Adrenal gland (tissue), 19 donors: ENCODE measurements at regions of chr22 and their contacts with region 1.

Region 1: GRCh38 chr22:25447686-25448434 is 116.6 kb upstream of the GRK3 start:
- DNase-seq: peak; percentile 85 to 97 (median 88)
- H3K4me3 ChIP-seq: peak overlapping the region; percentile 61 to 98 (median 74)
- H3K27ac ChIP-seq: peak overlapping the region in 4 of 5 donors; percentile 39 to 80 (median 71)
- H3K4me1 ChIP-seq: peaks cover 5 to 37% of the 10 kb centered on the region in 2 donors
- H3K27me3 ChIP-seq: no peaks in the 10 kb centered on the region
- CTCF ChIP-seq: peak; percentile 78 to 96 (median 90)
- POLR2A ChIP-seq: peak in 1 of 2 donors; percentile 44

Region 2: GRCh38 chr22:25362215-25362882 is 85.5 kb before region 1 on chr22:
- intact Hi-C with region 1: loop called in 1 of 2 experiments (anchors 10 kb)
- DNase-seq: peak; percentile 51 to 87 (median 73)
- H3K4me3 ChIP-seq: no peak overlapping the region
- H3K27ac ChIP-seq: peak overlapping the region in 1 of 5 donors; percentile 50
- H3K4me1 ChIP-seq: peaks cover 0 to 18% of the 10 kb centered on the region in 2 donors
- H3K27me3 ChIP-seq: no peaks in the 10 kb centered on the region
- CTCF ChIP-seq: peak; percentile 78 to 87 (median 83)
- POLR2A ChIP-seq: no peak